A549 (cell line): ENCODE measurements at regions of chrX and their contacts with region 1.

Region 1: GRCh38 chrX:34901761-34902160 is 40.8 kb upstream of the FAM47B start:
- DNase-seq: no peak
- ATAC-seq: no peak
- H3K4me3 ChIP-seq: no peak overlapping the region
- H3K27ac ChIP-seq: no peak overlapping the region
- H3K4me1 ChIP-seq: no peaks in the 10 kb centered on the region
- CTCF ChIP-seq: no peak
- EP300 ChIP-seq: no peak
- POLR2A ChIP-seq: no peak
- RAD21 ChIP-seq: no peak

Region 2: GRCh38 chrX:34810364-34810763 is 91.4 kb before region 1 on chrX:
- CTCF ChIA-PET with region 1: no interaction called
- POLR2A ChIA-PET with region 1: no interaction called
- DNase-seq: no peak
- ATAC-seq: no peak; a peak in 1 of 6 replicates
- H3K4me3 ChIP-seq: no peak overlapping the region
- H3K27ac ChIP-seq: no peak overlapping the region
- H3K4me1 ChIP-seq: peaks cover 11% of the 10 kb centered on the region; the same call in 2 of the 3 replicates
- CTCF ChIP-seq: no peak
- EP300 ChIP-seq: no peak
- POLR2A ChIP-seq: no peak
- RAD21 ChIP-seq: no peak

Region 3: DNA sequence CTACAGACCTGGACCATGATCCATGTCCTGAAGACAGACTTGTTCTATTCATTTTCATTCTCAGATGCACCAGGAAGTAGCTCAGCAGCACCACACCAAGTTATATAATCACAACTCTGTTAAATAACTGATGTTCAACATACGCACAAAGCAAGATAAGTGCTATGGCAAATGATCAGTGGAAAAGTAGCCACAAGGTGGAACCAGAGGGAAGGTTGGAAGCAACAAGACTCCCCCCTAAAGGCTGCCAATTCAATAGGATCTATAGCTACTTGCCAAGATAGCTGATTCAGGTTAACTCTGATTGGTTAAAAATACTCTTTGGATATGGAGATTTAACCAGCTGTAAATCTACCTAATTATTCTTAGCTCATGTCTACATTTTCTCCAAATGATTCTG is 17.1 kb after region 1 on chrX:
- CTCF ChIA-PET with region 1: interaction called, 12 read pairs
- POLR2A ChIA-PET with region 1: no interaction called
- DNase-seq: peak; percentile 29 to 70
- ATAC-seq: peak; percentile 86 to 94
- H3K4me3 ChIP-seq: no peak overlapping the region
- H3K27ac ChIP-seq: peak overlapping the region; percentile 59 to 82
- H3K4me1 ChIP-seq: peaks cover 31% of the 10 kb centered on the region
- CTCF ChIP-seq: peak; percentile 58
- EP300 ChIP-seq: no peak
- POLR2A ChIP-seq: no peak
- RAD21 ChIP-seq: peak; percentile 68 to 72